CD8-positive, alpha-beta T cell (primary cell): ENCODE measurements at regions of chr7 and their contacts with region 1.

Region 1: GRCh38 chr7:100428967-100429636 is 529 bp upstream of the MEPCE start:
- DNase-seq: peak; percentile 100
- ATAC-seq: peak; percentile 64
- H3K4me3 ChIP-seq: peak overlapping the region; percentile 69 to 96
- H3K4me3 Mint-ChIP-seq: peak overlapping the region; percentile 100
- H3K27ac ChIP-seq: peak overlapping the region; percentile 99 to 100
- H3K27ac Mint-ChIP-seq: peak overlapping the region; percentile 100
- H3K4me1 ChIP-seq: peaks cover 34% of the 10 kb centered on the region
- H3K4me1 Mint-ChIP-seq: peaks cover 42% of the 10 kb centered on the region
- H3K27me3 ChIP-seq: no peaks in the 10 kb centered on the region
- H3K27me3 Mint-ChIP-seq: no peaks in the 10 kb centered on the region
- CTCF ChIP-seq: no peak

Region 2: GRCh38 chr7:100049441-100050311 is 379.4 kb before region 1 on chr7 and contains the start of gene ZSCAN21:
- CTCF ChIA-PET with region 1: no interaction called
- POLR2A ChIA-PET with region 1: no interaction called
- intact Hi-C with region 1: loop called in 1 of 2 experiments (anchors 1 kb)
- DNase-seq: peak; percentile 51 to 91 (median 84)
- ATAC-seq: peak; percentile 89
- H3K4me3 ChIP-seq: peak within 1 kb of the TSS; percentile 69 to 99
- H3K4me3 Mint-ChIP-seq: peak within 1 kb of the TSS; percentile 93
- H3K27ac ChIP-seq: peak within 1 kb of the TSS; percentile 87 to 96
- H3K27ac Mint-ChIP-seq: peak within 1 kb of the TSS; percentile 98
- H3K4me1 ChIP-seq: peaks cover 12% of the 10 kb centered on the region
- H3K4me1 Mint-ChIP-seq: peaks cover 25% of the 10 kb centered on the region
- H3K27me3 ChIP-seq: no peaks in the 10 kb centered on the region
- H3K27me3 Mint-ChIP-seq: no peaks in the 10 kb centered on the region
- CTCF ChIP-seq: no peak
- total RNA-seq, gene ZSCAN21: 4.8 to 5.7 TPM

Region 3: GRCh38 chr7:100148559-100149350 is 280.3 kb before region 1 on chr7 and contains the start of gene LAMTOR4:
- CTCF ChIA-PET with region 1: no interaction called
- POLR2A ChIA-PET with region 1: interaction called, 5 read pairs
- intact Hi-C with region 1: loop called (anchors 1 kb)
- DNase-seq: peak; percentile 94 to 100 (median 97)
- ATAC-seq: peak; percentile 95
- H3K4me3 ChIP-seq: peak within 1 kb of the TSS; percentile 71 to 82
- H3K4me3 Mint-ChIP-seq: peak within 1 kb of the TSS; percentile 97
- H3K27ac ChIP-seq: peak within 1 kb of the TSS; percentile 73 to 95
- H3K27ac Mint-ChIP-seq: peak within 1 kb of the TSS; percentile 97
- H3K4me1 ChIP-seq: peaks cover 23% of the 10 kb centered on the region
- H3K4me1 Mint-ChIP-seq: peaks cover 38% of the 10 kb centered on the region
- H3K27me3 ChIP-seq: no peaks in the 10 kb centered on the region
- H3K27me3 Mint-ChIP-seq: no peaks in the 10 kb centered on the region
- CTCF ChIP-seq: no peak
- total RNA-seq, gene LAMTOR4: 68.4 to 83.1 TPM

Region 4: DNA sequence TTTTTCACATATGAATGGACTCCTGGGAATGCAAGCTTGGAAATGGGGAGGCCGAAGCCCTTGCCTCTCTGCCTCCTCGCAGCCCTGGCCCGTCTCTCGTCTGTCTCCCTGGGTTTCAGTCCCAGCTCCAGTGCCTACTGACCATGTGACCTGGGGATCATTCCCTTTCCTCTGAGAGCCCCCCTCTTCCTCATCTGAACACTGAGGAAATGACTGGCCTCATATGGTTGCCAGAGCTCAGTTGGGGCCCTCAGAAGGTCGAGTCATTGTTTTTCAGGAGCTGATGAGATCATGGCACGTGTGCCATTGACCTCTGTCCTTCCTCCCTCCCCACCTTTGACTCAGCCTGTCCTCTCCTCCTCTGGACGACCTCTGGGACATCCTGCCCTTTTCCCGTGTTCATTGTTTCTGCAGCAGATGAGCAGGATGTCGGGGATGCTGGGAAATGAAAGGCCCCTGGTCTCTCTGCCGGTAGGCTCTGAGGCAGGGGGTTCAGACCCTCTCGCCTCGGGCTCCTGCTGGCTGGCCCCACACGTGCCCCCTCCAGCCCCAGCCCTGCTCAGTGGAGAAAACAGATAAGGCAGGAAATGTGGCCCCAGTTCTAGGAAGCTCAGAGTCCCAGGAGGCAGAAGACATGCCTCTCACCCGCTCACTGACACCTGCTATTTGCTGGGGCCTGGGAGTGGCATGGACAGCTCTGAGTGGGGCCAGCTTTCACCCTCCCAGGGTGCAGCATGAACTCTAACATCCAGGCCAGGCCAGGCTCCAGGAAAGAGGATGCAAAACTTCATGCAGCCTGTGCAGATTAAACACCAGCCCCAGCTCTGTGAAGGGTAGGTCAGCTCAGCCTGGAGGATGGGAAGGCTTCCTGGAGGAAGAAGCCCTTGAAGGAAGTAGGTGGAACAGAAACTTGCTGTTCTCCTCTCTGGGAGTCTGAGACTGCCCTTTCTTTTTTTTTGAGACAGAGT is 15.5 kb after region 1 on chr7:
- CTCF ChIA-PET with region 1: interaction called, 3 read pairs
- POLR2A ChIA-PET with region 1: interaction called, 18 read pairs
- intact Hi-C with region 1: no loop called
- DNase-seq: peak in 1 of 9 experiments; percentile 15
- ATAC-seq: no peak
- H3K4me3 ChIP-seq: no peak overlapping the region
- H3K4me3 Mint-ChIP-seq: no peak overlapping the region
- H3K27ac ChIP-seq: no peak overlapping the region
- H3K27ac Mint-ChIP-seq: no peak overlapping the region
- H3K4me1 ChIP-seq: peaks cover 10% of the 10 kb centered on the region
- H3K4me1 Mint-ChIP-seq: peaks cover 10% of the 10 kb centered on the region
- H3K27me3 ChIP-seq: no peaks in the 10 kb centered on the region
- H3K27me3 Mint-ChIP-seq: no peaks in the 10 kb centered on the region
- CTCF ChIP-seq: no peak

Region 5: GRCh38 chr7:100493476-100494264 is 64.6 kb after region 1 on chr7:
- CTCF ChIA-PET with region 1: no interaction called
- POLR2A ChIA-PET with region 1: no interaction called
- intact Hi-C with region 1: no loop called
- DNase-seq: peak in 8 of 9 experiments; percentile 40 to 81 (median 62)
- ATAC-seq: peak; percentile 85
- H3K4me3 ChIP-seq: peak overlapping the region; percentile 29 to 42
- H3K4me3 Mint-ChIP-seq: peak overlapping the region; percentile 73
- H3K27ac ChIP-seq: no peak overlapping the region
- H3K27ac Mint-ChIP-seq: no peak overlapping the region
- H3K4me1 ChIP-seq: peaks cover 12% of the 10 kb centered on the region
- H3K4me1 Mint-ChIP-seq: peaks cover 13% of the 10 kb centered on the region
- H3K27me3 ChIP-seq: no peaks in the 10 kb centered on the region
- H3K27me3 Mint-ChIP-seq: no peaks in the 10 kb centered on the region
- CTCF ChIP-seq: no peak

Region 6: GRCh38 chr7:100642534-100642907 is 213.4 kb after region 1 on chr7:
- CTCF ChIA-PET with region 1: no interaction called
- POLR2A ChIA-PET with region 1: no interaction called
- intact Hi-C with region 1: no loop called
- DNase-seq: peak in 4 of 9 experiments; percentile 13 to 48 (median 32)
- ATAC-seq: peak; percentile 38
- H3K4me3 ChIP-seq: no peak overlapping the region
- H3K4me3 Mint-ChIP-seq: no peak overlapping the region
- H3K27ac ChIP-seq: no peak overlapping the region
- H3K27ac Mint-ChIP-seq: no peak overlapping the region
- H3K4me1 ChIP-seq: no peaks in the 10 kb centered on the region
- H3K4me1 Mint-ChIP-seq: no peaks in the 10 kb centered on the region
- H3K27me3 ChIP-seq: no peaks in the 10 kb centered on the region
- H3K27me3 Mint-ChIP-seq: peaks cover 2% of the 10 kb centered on the region
- CTCF ChIP-seq: no peak

Region 7: GRCh38 chr7:100673300-100673941 is 244.3 kb after region 1 on chr7 and contains the start of gene GNB2:
- CTCF ChIA-PET with region 1: no interaction called
- POLR2A ChIA-PET with region 1: interaction called, 11 read pairs
- intact Hi-C with region 1: loop called (anchors 1 to 2 kb)
- DNase-seq: peak; percentile 90 to 98 (median 96)
- ATAC-seq: peak; percentile 53
- H3K4me3 ChIP-seq: peak within 1 kb of the TSS; percentile 89 to 99
- H3K4me3 Mint-ChIP-seq: peak within 1 kb of the TSS; percentile 91
- H3K27ac ChIP-seq: peak within 1 kb of the TSS; percentile 80 to 98
- H3K27ac Mint-ChIP-seq: peak within 1 kb of the TSS; percentile 93
- H3K4me1 ChIP-seq: peaks cover 13% of the 10 kb centered on the region
- H3K4me1 Mint-ChIP-seq: peaks cover 23% of the 10 kb centered on the region
- H3K27me3 ChIP-seq: no peaks in the 10 kb centered on the region
- H3K27me3 Mint-ChIP-seq: no peaks in the 10 kb centered on the region
- CTCF ChIP-seq: no peak
- total RNA-seq, gene GNB2: 69.4 to 69.6 TPM

Region 8: DNA sequence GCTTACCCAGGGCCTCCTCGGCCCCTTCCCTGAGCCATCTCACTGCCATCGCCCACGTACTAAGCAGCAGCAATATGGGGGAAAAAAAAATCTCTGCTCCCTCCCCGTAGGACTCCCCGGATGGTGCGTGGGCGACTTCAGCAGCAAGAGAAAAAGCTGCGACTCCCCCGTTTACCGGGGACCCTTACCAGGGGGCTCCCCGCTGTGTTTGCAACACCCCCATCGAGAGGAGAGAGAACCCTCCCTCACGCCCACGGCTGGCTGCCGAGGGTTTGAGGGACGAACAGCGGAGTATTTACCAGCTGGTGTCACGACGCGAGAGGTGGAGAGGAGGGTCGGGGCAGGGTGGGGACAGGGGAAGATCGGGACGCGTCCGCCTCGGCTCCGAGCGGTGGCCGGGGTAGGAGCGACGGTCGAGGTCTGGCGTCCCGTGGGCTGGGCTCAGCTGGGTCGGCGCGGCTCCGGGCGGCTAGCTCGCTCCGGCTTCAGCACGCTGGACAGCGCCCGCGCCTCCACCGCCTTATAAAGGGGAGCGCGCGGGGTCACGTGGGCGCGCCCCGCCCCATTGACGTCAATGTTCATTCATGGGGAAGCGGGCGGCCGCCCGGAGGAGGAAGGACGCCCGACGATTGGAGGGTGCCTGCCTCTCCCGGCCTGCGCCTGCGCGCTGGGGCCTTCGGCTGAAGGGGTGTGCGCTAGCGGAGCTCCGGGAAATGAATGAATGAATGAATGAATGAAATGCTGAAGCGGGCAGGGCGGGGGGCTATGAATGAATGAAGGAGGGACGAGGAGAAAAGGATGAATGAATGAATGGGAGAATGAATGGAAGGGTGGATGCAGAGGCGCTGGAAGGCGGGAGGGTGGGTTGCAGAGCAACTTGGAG is 736.2 kb after region 1 on chr7 and contains the start of gene VGF:
- CTCF ChIA-PET with region 1: no interaction called
- POLR2A ChIA-PET with region 1: no interaction called
- intact Hi-C with region 1: loop called in 1 of 2 experiments (anchors 5 kb)
- DNase-seq: peak; percentile 83 to 96 (median 92)
- ATAC-seq: peak; percentile 79
- H3K4me3 ChIP-seq: no peak within 1 kb of the TSS
- H3K4me3 Mint-ChIP-seq: peak within 1 kb of the TSS; percentile 71
- H3K27ac ChIP-seq: no peak within 1 kb of the TSS
- H3K27ac Mint-ChIP-seq: no peak within 1 kb of the TSS
- H3K4me1 ChIP-seq: peaks cover 61% of the 10 kb centered on the region
- H3K4me1 Mint-ChIP-seq: peaks cover 39% of the 10 kb centered on the region
- H3K27me3 ChIP-seq: peaks cover 51 to 81% of the 10 kb centered on the region in 2 experiments
- H3K27me3 Mint-ChIP-seq: peaks cover 60% of the 10 kb centered on the region
- CTCF ChIP-seq: no peak
- total RNA-seq, gene VGF: not detected